ENCODE measurements at regions of chr11 and their contacts with region 1.

Region 1: GRCh38 chr11:86955361-86956120 is at the start of gene FZD4:
- DNase-seq: peak; percentile 94 to 95 (median 95)
- ATAC-seq: peak; percentile 88 to 95 (median 91)
- H3K4me3 ChIP-seq: peak within 1 kb of the TSS; percentile 84 to 100 (median 94)
- H3K27ac ChIP-seq: peak within 1 kb of the TSS; percentile 93 to 100 (median 98)
- H3K4me1 ChIP-seq: peaks cover 4 to 55% (median 33%) of the 10 kb centered on the region in 12 donors
- H3K27me3 ChIP-seq: peaks cover 0 to 14% (median 0%) of the 10 kb centered on the region in 9 donors
- CTCF ChIP-seq: peak in 11 of 12 donors; percentile 7 to 76 (median 45)
- POLR2A ChIP-seq: peak in 1 of 2 donors; percentile 52
- total RNA-seq, gene FZD4: 16.7 to 39.6 (median 22.1) TPM

Region 2: DNA sequence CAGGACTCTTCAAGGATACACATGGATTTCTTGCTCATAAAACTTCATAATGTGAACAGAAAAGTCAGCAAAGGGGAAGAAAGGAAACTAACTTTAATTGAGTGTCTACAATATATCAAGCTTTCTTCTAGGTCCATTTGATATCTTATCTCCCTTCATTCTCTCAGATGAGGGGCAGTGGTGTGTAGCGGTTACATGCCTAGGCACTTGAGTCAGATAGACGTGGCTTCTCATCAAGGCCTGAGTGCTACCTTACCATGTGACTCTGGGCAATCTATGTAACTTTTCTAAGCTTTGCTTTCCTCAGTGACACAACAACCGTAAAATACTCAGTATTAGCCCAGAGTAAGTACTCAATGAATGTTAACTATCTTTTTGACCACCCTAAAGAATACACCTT is 24.9 kb after region 1 on chr11:
- intact Hi-C with region 1: loop called in 1 of 10 experiments (anchors 2 kb)
- DNase-seq: no peak
- ATAC-seq: no peak
- H3K4me3 ChIP-seq: no peak overlapping the region
- H3K27ac ChIP-seq: peak overlapping the region in 2 of 12 donors; percentile 39 to 58
- H3K4me1 ChIP-seq: peaks cover 2 to 70% (median 36%) of the 10 kb centered on the region in 12 donors
- H3K27me3 ChIP-seq: no peaks in the 10 kb centered on the region
- CTCF ChIP-seq: no peak
- POLR2A ChIP-seq: no peak

Region 3: GRCh38 chr11:86990515-86990914 is 35.0 kb after region 1 on chr11:
- intact Hi-C with region 1: loop called in 3 of 10 experiments (anchors 5 kb)
- DNase-seq: no peak
- ATAC-seq: no peak
- H3K4me3 ChIP-seq: no peak overlapping the region
- H3K27ac ChIP-seq: no peak overlapping the region
- H3K4me1 ChIP-seq: peaks cover 0 to 26% (median 12%) of the 10 kb centered on the region in 12 donors
- H3K27me3 ChIP-seq: no peaks in the 10 kb centered on the region
- CTCF ChIP-seq: no peak
- POLR2A ChIP-seq: no peak

Region 4: DNA sequence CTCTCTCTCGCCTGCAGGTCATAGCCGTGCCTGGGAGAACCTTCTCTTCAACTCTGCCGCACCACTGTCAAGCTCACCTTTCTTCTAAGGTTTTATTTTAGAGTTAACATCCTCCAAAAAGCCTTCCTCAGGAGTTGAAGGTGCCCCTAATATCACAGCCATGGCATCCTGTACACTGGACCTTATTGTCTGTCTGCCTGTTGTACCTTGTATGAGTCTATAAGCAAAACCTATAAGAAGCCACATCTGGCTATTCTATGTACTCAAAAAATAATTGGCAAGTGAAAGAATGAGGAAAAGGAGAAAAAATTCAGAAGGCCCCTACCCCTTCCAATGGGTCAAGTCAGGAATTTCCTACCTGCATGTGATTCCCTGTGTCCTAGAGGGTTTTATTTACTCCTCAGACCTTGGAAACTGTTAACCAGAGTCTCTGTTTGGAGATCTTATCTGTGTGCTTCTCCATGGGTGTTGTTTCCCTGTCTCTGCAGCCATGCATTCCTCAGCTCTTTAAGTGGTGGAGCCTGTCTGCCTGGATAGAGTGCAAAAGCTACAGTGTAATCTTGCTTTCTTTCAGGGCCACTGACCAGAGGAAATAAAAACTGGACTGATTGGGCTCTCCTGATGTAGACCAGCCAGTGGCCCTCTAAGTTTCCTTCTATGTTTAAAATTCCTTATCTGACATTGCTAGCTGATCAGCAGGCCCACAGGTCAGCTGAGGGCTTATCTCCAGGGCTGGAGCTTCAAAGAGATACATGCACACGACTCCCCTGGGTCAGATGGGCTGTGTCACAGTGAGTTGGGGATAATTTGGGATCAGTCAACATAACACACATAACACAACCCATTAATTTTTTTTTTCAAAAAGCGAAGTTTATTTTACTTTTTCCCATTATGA is 44.6 kb after region 1 on chr11:
- intact Hi-C with region 1: loop called in 1 of 10 experiments (anchors 5 kb)
- DNase-seq: peak in 2 of 5 donors; percentile 20 to 40
- ATAC-seq: peak; percentile 66 to 85 (median 76)
- H3K4me3 ChIP-seq: peak overlapping the region in 1 of 12 donors; percentile 2
- H3K27ac ChIP-seq: peak overlapping the region in 6 of 12 donors; percentile 5 to 68 (median 23)
- H3K4me1 ChIP-seq: peaks cover 0 to 23% (median 9%) of the 10 kb centered on the region in 12 donors
- H3K27me3 ChIP-seq: no peaks in the 10 kb centered on the region
- CTCF ChIP-seq: no peak
- POLR2A ChIP-seq: no peak

Region 5: GRCh38 chr11:87037450-87038234 is 82.1 kb after region 1 on chr11 and contains the start of gene TMEM135:
- intact Hi-C with region 1: loop called in 9 of 10 experiments (anchors 1 to 5 kb)
- DNase-seq: peak; percentile 95 to 97 (median 97)
- ATAC-seq: peak; percentile 99
- H3K4me3 ChIP-seq: peak within 1 kb of the TSS; percentile 39 to 94 (median 87)
- H3K27ac ChIP-seq: peak within 1 kb of the TSS; percentile 82 to 96 (median 88)
- H3K4me1 ChIP-seq: peaks cover 0 to 52% (median 32%) of the 10 kb centered on the region in 12 donors
- H3K27me3 ChIP-seq: no peaks in the 10 kb centered on the region
- CTCF ChIP-seq: peak in 2 of 12 donors; percentile 16 to 38
- POLR2A ChIP-seq: peak in 1 of 2 donors; percentile 84
- total RNA-seq, gene TMEM135: 11.6 to 22.7 (median 15.0) TPM

Region 6: GRCh38 chr11:87097582-87097981 is 142.0 kb after region 1 on chr11:
- intact Hi-C with region 1: loop called in 3 of 10 experiments (anchors 5 to 10 kb)
- DNase-seq: peak in 3 of 5 donors; percentile 25 to 34 (median 26)
- ATAC-seq: peak; percentile 68 to 84 (median 76)
- H3K4me3 ChIP-seq: no peak overlapping the region
- H3K27ac ChIP-seq: no peak overlapping the region
- H3K4me1 ChIP-seq: peaks cover 0 to 9% (median 0%) of the 10 kb centered on the region in 12 donors
- H3K27me3 ChIP-seq: no peaks in the 10 kb centered on the region
- CTCF ChIP-seq: peak; percentile 43 to 76 (median 64)
- POLR2A ChIP-seq: no peak